ENCODE measurements at regions of chr11 and their contacts with region 1.

Region 1: GRCh38 chr11:10405855-10406592 is 49.0 kb upstream of the AMPD3 start:
- DNase-seq: peak; percentile 87
- ATAC-seq: peak; percentile 92
- H3K4me3 ChIP-seq: no peak overlapping the region
- H3K27ac ChIP-seq: peak overlapping the region; percentile 43; the same call in 1 of the 2 replicates
- H3K4me1 ChIP-seq: peaks cover 21 to 43% of the 10 kb centered on the region in 2 experiments
- H3K27me3 ChIP-seq: no peaks in the 10 kb centered on the region
- CTCF ChIP-seq: peak; percentile 78 to 98 (median 88)
- POLR2A ChIP-seq: no peak
- RAD21 ChIP-seq: peak; percentile 100

Region 2: GRCh38 chr11:10455637-10456487 is 49.8 kb after region 1 on chr11:
- CTCF ChIA-PET with region 1: interaction called, 24 read pairs
- POLR2A ChIA-PET with region 1: no interaction called
- RAD21 ChIA-PET with region 1: interaction called, 3 to 4 read pairs
- intact Hi-C with region 1: no loop called
- DNase-seq: peak; percentile 26
- ATAC-seq: peak; percentile 64
- H3K4me3 ChIP-seq: peak overlapping the region; percentile 62 to 71
- H3K27ac ChIP-seq: peak overlapping the region; percentile 77
- H3K4me1 ChIP-seq: peaks cover 36 to 65% of the 10 kb centered on the region in 2 experiments
- H3K27me3 ChIP-seq: no peaks in the 10 kb centered on the region
- CTCF ChIP-seq: no peak
- POLR2A ChIP-seq: no peak
- RAD21 ChIP-seq: no peak

Region 3: DNA sequence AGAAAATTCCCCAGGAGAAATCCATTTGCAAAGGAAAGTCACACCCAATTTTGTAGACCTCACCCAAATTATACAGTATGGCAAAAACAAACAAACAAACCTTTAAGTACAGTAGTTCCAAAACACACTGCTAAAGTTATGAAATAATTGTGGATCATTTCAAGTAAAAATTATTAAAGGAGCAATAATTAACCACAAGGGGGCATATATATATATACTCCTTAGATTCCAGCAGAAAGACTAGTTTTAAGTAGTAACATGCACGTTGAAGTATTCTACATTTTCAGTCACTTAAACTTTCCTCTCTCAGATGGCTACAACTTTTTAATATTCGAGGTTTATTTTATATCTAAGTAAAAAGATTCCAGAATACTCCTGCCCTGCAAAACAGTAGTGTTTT is 108.2 kb after region 1 on chr11:
- CTCF ChIA-PET with region 1: interaction called, 3 read pairs
- POLR2A ChIA-PET with region 1: no interaction called
- RAD21 ChIA-PET with region 1: interaction called in 1 of 2 experiments, 5 read pairs
- intact Hi-C with region 1: loop called (anchors 1 kb)
- DNase-seq: no peak
- ATAC-seq: no peak
- H3K4me3 ChIP-seq: no peak overlapping the region
- H3K27ac ChIP-seq: peak overlapping the region; percentile 63; the same call in 1 of the 2 replicates
- H3K4me1 ChIP-seq: peaks cover 23 to 55% of the 10 kb centered on the region in 2 experiments
- H3K27me3 ChIP-seq: no peaks in the 10 kb centered on the region
- CTCF ChIP-seq: peak; percentile 16 to 51 (median 39); a peak in 3 of 6 replicates
- POLR2A ChIP-seq: no peak
- RAD21 ChIP-seq: peak; percentile 47; the same call in 1 of the 2 replicates

Region 4: DNA sequence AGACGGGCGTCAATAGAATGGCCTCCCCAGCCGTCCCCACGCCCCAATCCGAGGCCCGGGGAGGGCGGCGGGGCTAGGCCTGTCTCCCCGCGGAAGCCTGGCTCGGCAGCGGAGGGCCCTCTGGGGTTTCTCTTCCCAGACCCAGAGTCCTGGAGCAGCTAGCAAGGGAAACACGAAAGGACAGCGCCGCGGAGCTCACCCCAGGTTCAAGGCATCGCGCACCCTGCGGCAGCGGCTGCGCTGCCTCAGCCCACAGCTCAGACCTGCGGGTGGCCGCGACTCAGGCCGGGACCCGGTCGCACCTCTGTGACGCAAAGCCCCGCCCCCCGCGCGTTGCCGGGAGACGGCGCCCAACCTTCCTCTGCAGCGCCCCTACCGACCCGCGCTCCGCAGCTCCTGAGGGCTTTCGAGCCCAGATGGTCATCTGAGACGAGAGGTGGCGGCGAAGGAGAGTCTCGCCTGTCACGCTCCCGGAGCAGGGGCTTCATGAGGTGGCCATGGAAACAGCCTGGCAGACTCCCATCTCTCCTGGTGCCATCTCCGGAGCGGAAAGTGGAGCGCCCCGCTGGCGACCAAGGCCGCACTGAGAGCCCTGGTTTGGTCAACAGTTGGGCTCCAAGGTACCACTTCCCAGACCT is 135.0 kb after region 1 on chr11 and contains the start of gene RNF141:
- CTCF ChIA-PET with region 1: interaction called, 13 read pairs
- POLR2A ChIA-PET with region 1: interaction called, 4 read pairs
- RAD21 ChIA-PET with region 1: interaction called in 1 of 2 experiments, 3 read pairs
- intact Hi-C with region 1: no loop called
- DNase-seq: peak; percentile 84
- ATAC-seq: peak; percentile 89
- H3K4me3 ChIP-seq: peak within 1 kb of the TSS; percentile 76 to 83
- H3K27ac ChIP-seq: peak within 1 kb of the TSS; percentile 94
- H3K4me1 ChIP-seq: peaks cover 40 to 54% of the 10 kb centered on the region in 2 experiments
- H3K27me3 ChIP-seq: no peaks in the 10 kb centered on the region
- CTCF ChIP-seq: peak; percentile 57 to 83 (median 67); a peak in 5 of 6 replicates
- POLR2A ChIP-seq: peak; percentile 91
- RAD21 ChIP-seq: peak; percentile 53
- total RNA-seq, gene RNF141: 133 TPM

Region 5: DNA sequence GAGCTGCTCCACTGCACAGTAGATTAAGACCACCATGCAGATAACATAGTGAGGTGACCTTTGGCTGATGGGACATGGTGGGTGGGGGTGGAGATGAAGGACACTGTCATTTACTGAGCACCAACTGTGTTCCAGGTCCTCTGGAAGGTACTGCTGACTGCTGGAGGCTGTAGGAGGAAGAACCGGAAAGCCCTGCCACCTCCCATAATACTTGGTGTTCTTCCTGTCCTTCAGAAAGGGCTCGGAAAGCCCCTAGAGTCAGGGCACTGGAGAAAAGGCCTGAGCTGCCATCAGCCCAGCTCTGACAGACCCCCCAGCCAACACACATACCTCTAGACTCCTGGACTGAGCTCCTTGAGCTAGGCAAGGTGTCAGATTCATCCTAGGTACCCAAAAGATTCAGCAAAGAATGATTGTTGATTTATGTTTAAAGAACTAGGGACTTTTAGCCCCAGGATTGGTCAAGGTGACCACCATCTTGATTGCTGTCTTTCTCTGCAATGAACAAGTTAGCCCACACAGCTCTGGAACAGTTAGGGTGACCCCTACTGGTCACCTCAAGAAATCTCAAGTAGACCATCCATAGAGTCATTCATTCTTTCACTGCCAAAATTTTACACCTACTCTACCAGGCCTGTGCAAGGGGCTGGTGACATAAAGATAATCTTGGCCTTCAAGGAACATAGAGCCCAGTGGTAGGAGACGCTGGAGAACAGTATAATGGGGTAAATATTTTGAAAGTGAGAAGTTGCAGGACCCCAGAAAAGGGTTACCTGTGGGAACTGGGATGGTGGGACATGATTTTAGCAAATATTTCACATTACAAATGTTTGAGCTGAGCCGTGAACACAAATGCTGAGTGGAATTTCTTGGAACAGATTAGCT is 248.1 kb after region 1 on chr11:
- CTCF ChIA-PET with region 1: interaction called, 17 read pairs
- POLR2A ChIA-PET with region 1: interaction called, 3 read pairs
- RAD21 ChIA-PET with region 1: interaction called in 1 of 2 experiments, 4 read pairs
- intact Hi-C with region 1: loop called (anchors 2 kb)
- DNase-seq: peak; percentile 55
- ATAC-seq: peak; percentile 36
- H3K4me3 ChIP-seq: 0 out of 4 replicates have a peak overlapping the region, but pooled peaks of 1 of the 2 experiments have one; percentile 3
- H3K27ac ChIP-seq: peak overlapping the region; percentile 100
- H3K4me1 ChIP-seq: peaks cover 98 to 100% of the 10 kb centered on the region in 2 experiments
- H3K27me3 ChIP-seq: no peaks in the 10 kb centered on the region
- CTCF ChIP-seq: peak in 2 of 3 experiments; percentile 72 to 86; a peak in 4 of 6 replicates
- POLR2A ChIP-seq: no peak
- RAD21 ChIP-seq: no peak